Activated CD8-positive, alpha-beta T cell treated with anti-CD3 and anti-CD28 coated beads, Interleukin-2, amount 10 ng/mL, durations not matched to agents 7 days and 5 days (primary cell): ENCODE measurements at regions of chr15 and their contacts with region 1.

Region 1: DNA sequence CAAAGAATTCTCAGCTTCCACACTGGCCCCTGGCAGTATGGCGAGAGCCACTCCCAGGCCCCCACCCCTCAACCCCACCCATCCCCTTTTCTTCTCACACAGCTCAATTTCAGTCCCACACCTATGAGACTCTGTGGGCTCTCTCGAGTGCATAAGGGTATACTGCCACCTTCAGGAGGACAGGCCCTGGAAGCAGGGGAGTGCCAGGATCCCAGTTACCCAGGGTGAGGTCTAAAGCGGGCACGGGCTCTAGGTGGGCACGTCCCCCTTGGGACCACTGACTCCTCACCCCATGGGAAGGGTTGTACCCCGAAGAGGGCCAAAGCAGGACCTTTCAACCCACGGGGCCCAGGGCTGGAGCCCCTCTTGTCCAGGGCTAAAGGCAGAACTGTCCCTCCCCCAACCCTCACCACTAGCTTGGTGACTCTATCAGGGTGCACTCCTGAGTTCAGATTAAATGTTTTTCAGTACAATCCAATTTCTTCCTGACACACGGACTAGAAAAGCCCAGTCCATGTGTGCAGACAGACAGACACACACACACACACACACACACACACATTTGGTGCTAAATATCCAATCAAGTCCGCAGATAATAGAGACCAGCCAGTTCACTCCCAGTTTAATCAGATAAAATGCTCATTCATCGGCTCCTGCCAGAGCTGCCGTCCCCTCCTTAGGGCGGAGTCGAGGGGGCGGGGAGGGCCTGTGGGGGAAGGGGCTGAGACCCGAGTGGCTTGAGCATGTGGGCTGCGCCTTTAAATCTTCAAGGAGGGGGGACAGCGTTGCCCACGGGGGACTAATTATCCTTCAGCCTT is 59.4 kb downstream of the CYP11A1 start:
- DNase-seq: peak; percentile 68
- ATAC-seq: peak; percentile 84
- H3K4me3 Mint-ChIP-seq: no peak overlapping the region
- H3K27ac Mint-ChIP-seq: no peak overlapping the region
- H3K4me1 Mint-ChIP-seq: peaks cover 3% of the 10 kb centered on the region
- H3K27me3 Mint-ChIP-seq: peaks cover 26% of the 10 kb centered on the region

Region 2: GRCh38 chr15:74127260-74127953 is 180.6 kb before region 1 on chr15:
- CTCF ChIA-PET with region 1: interaction called, 23 read pairs
- POLR2A ChIA-PET with region 1: no interaction called
- DNase-seq: peak; percentile 90
- ATAC-seq: peak; percentile 96
- H3K4me3 Mint-ChIP-seq: no peak overlapping the region
- H3K27ac Mint-ChIP-seq: no peak overlapping the region
- H3K4me1 Mint-ChIP-seq: peaks cover 26% of the 10 kb centered on the region
- H3K27me3 Mint-ChIP-seq: peaks cover 56% of the 10 kb centered on the region

Region 3: GRCh38 chr15:74228723-74229081 is 79.3 kb before region 1 on chr15:
- CTCF ChIA-PET with region 1: no interaction called
- POLR2A ChIA-PET with region 1: no interaction called
- DNase-seq: no peak
- ATAC-seq: no peak
- H3K4me3 Mint-ChIP-seq: no peak overlapping the region
- H3K27ac Mint-ChIP-seq: no peak overlapping the region
- H3K4me1 Mint-ChIP-seq: no peaks in the 10 kb centered on the region
- H3K27me3 Mint-ChIP-seq: peaks cover 12% of the 10 kb centered on the region

Region 4: DNA sequence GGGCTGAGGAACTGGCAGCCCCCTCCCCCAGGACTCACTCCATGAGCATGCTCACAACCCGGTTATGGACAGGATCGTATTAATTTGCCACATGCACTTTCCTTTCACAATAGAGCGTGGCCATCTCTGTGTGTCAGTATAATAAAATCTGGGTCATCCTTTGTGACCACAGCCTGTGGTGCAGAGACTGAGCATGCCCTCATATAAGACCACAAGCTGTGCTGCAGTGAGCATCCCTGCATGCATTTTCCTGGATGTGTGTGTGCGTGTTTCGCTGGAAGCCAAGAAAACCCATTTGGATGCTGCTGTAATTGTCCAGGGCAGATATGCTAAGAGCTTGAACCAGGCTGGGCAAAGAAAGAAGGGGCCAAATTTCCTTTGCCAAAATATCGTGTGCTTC is 19.7 kb after region 1 on chr15:
- CTCF ChIA-PET with region 1: interaction called, 119 read pairs
- POLR2A ChIA-PET with region 1: no interaction called
- DNase-seq: no peak
- ATAC-seq: no peak
- H3K4me3 Mint-ChIP-seq: no peak overlapping the region
- H3K27ac Mint-ChIP-seq: peak overlapping the region; percentile 80
- H3K4me1 Mint-ChIP-seq: peaks cover 30% of the 10 kb centered on the region
- H3K27me3 Mint-ChIP-seq: peaks cover 2% of the 10 kb centered on the region

Region 5: GRCh38 chr15:74382004-74382816 is 74.2 kb after region 1 on chr15:
- CTCF ChIA-PET with region 1: no interaction called
- POLR2A ChIA-PET with region 1: no interaction called
- DNase-seq: peak; percentile 85
- ATAC-seq: peak; percentile 57
- H3K4me3 Mint-ChIP-seq: no peak overlapping the region
- H3K27ac Mint-ChIP-seq: peak overlapping the region; percentile 54
- H3K4me1 Mint-ChIP-seq: peaks cover 66% of the 10 kb centered on the region
- H3K27me3 Mint-ChIP-seq: no peaks in the 10 kb centered on the region